KBM-7 (cell line): ENCODE measurements at regions of chr3 and their contacts with region 1.

Region 1: GRCh38 chr3:38136777-38137614 is at the start of gene ACAA1:
- DNase-seq: peak; percentile 99

Region 2: GRCh38 chr3:37590328-37591079 is 546.5 kb before region 1 on chr3:
- in situ Hi-C with region 1: no loop called
- DNase-seq: no peak

Region 3: GRCh38 chr3:37974121-37975083 is 162.6 kb before region 1 on chr3:
- in situ Hi-C with region 1: no loop called
- DNase-seq: peak; percentile 59

Region 4: GRCh38 chr3:37996785-37997301 is 140.2 kb before region 1 on chr3:
- in situ Hi-C with region 1: no loop called
- DNase-seq: peak; percentile 87

Region 5: DNA sequence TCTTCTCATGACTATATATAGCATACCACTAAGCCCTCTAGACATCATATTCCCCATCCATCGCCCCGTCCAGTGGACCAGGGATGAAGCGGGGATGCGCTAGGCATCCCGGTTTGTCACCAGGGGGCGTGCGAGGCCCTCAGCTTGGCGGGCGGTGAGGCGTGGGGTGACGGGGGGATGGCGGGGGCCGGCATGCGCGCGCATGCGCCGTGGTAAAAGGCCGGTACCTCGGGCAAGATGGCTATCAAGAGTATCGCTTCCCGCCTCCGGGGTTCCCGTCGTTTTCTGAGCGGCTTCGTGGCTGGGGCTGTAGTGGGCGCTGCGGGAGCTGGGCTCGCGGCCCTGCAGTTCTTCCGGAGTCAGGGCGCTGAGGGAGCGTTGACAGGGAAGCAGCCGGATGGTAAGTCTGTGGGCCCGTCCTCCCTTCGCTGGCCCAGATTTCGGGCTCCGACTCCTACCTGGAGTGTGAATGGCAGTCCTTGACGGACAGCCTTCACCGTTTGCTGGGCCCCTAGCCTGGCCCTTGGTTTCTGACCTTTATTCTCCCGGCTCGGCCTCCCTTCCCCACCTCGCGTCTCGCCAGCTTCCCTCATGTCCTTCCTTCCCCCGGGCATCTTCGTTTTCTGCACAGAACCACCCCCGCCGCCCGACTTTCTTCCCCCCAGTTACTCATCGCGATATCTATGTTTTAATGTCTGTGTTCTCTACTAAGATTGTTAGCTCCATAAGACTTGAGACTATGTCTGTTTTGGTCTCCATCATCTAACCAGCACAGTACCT is 359.3 kb after region 1 on chr3 and contains the start of gene EXOG:
- in situ Hi-C with region 1: loop called (anchors 25 kb)
- DNase-seq: peak; percentile 90